ENCODE measurements at regions of chr7 and their contacts with region 1.

Region 1: GRCh38 chr7:108114117-108114841 is 15.9 kb downstream of the LAMB4 start:
- DNase-seq: no peak
- H3K4me3 Mint-ChIP-seq: no peak overlapping the region
- H3K27ac Mint-ChIP-seq: no peak overlapping the region
- H3K4me1 Mint-ChIP-seq: peaks cover 8% of the 10 kb centered on the region
- H3K27me3 Mint-ChIP-seq: peaks cover 13% of the 10 kb centered on the region

Region 2: GRCh38 chr7:108127461-108127860 is 13.2 kb after region 1 on chr7:
- intact Hi-C with region 1: loop called (anchors 1 kb)
- DNase-seq: no peak
- H3K4me3 Mint-ChIP-seq: no peak overlapping the region
- H3K27ac Mint-ChIP-seq: no peak overlapping the region
- H3K4me1 Mint-ChIP-seq: peaks cover 7% of the 10 kb centered on the region
- H3K27me3 Mint-ChIP-seq: peaks cover 26% of the 10 kb centered on the region

Region 3: GRCh38 chr7:108146070-108146837 is 32.0 kb after region 1 on chr7:
- intact Hi-C with region 1: loop called (anchors 1 kb)
- DNase-seq: peak; percentile 34
- H3K4me3 Mint-ChIP-seq: no peak overlapping the region
- H3K27ac Mint-ChIP-seq: no peak overlapping the region
- H3K4me1 Mint-ChIP-seq: peaks cover 3% of the 10 kb centered on the region
- H3K27me3 Mint-ChIP-seq: peaks cover 26% of the 10 kb centered on the region

Measured in activated T-helper 2 cell treated with anti-CD3 and anti-CD28 coated beads, Interferon-gamma antibody, Interleukin-2, Interleukin-4, amounts not matched to agents 10 μg/mL and 5 μg/mL and 100 μg/mL, durations not matched to agents 14 hours and 24 hours and 36 hours (primary cell).